Activated T-helper 2 cell treated with anti-CD3 and anti-CD28 coated beads, Interferon-gamma antibody, Interleukin-2, Interleukin-4, amounts not matched to agents 10 μg/mL and 5 μg/mL and 100 μg/mL, durations not matched to agents 14 hours and 24 hours and 36 hours (primary cell): ENCODE measurements at regions of chr13 and their contacts with region 1.

Region 1: DNA sequence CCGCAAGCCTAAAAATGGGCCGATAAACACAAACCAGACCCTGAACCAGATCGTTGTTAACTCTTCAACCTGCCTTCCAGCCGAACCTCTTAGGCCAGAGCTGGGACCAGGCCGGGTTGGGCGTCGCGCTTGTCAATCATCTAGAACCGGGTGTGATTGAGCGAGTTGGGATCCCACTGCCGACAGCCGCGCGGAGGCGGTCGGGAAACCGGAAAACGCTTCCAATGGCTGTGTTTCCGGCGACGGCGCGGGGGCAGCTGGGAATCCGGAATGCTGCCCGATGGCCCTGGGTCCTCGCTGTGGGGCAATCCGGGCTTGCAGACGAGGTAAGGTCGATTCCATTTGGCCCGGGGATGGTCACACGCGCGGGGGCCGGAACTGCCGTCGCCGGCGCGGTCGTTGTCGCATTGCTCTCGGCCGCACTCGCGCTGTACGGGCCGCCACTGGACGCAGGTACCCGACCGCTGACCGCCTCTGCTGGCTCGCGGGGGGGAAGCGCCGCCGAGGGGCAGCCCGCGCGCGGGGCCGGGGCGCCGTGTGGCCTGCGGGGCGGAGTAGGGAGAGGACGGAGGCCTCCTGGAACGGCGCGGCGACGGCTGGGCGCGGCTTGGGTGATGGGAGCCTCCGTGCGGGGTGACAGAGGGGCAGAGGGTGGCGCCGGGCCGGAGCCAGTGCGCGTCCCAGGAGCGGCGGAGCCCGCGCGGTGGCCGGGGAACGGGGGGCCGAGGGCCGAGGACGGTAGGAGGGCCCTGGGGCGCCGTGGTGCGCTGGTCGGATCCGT is at the start of gene NAXD:
- DNase-seq: peak; percentile 76
- H3K4me3 Mint-ChIP-seq: peak within 1 kb of the TSS; percentile 93
- H3K27ac Mint-ChIP-seq: peak within 1 kb of the TSS; percentile 95
- H3K4me1 Mint-ChIP-seq: peaks cover 26% of the 10 kb centered on the region
- H3K27me3 Mint-ChIP-seq: no peaks in the 10 kb centered on the region
- total RNA-seq, gene NAXD: 21.7 and 22.1 TPM in 2 replicates

Region 2: GRCh38 chr13:110561344-110562035 is 54.0 kb before region 1 on chr13 and contains the start of gene RAB20:
- intact Hi-C with region 1: loop called (anchors 2 kb)
- DNase-seq: peak; percentile 60
- H3K4me3 Mint-ChIP-seq: peak within 1 kb of the TSS; percentile 87
- H3K27ac Mint-ChIP-seq: peak within 1 kb of the TSS; percentile 74
- H3K4me1 Mint-ChIP-seq: peaks cover 14% of the 10 kb centered on the region
- H3K27me3 Mint-ChIP-seq: peaks cover 40% of the 10 kb centered on the region
- total RNA-seq, gene RAB20: 2.8 and 4.0 TPM in 2 replicates